ENCODE measurements at regions of chr14 and their contacts with region 1.

Region 1: GRCh38 chr14:54773171-54773975 is 129.3 kb downstream of the GCH1 start:
- DNase-seq: peak; percentile 21 to 83 (median 58)
- ATAC-seq: peak; percentile 78
- H3K4me3 ChIP-seq: peak overlapping the region; percentile 14
- H3K4me3 Mint-ChIP-seq: peak overlapping the region in 9 of 10 donors; percentile 15 to 80 (median 71)
- H3K27ac ChIP-seq: peak overlapping the region; percentile 14
- H3K27ac Mint-ChIP-seq: peak overlapping the region; percentile 24 to 88 (median 77)
- H3K4me1 ChIP-seq: peaks cover 4 to 27% of the 10 kb centered on the region in 2 donors
- H3K4me1 Mint-ChIP-seq: peaks cover 19 to 42% (median 23%) of the 10 kb centered on the region in 7 donors
- H3K27me3 ChIP-seq: no peaks in the 10 kb centered on the region
- H3K27me3 Mint-ChIP-seq: peaks cover 0 to 31% (median 10%) of the 10 kb centered on the region in 5 donors

Region 2: GRCh38 chr14:54488646-54489317 is 284.6 kb before region 1 on chr14 and contains the start of gene GMFB:
- CTCF ChIA-PET with region 1: interaction called, 4 read pairs
- POLR2A ChIA-PET with region 1: no interaction called
- intact Hi-C with region 1: loop called (anchors 2 to 5 kb)
- DNase-seq: peak; percentile 72 to 88 (median 84)
- ATAC-seq: peak; percentile 97
- H3K4me3 ChIP-seq: peak within 1 kb of the TSS; percentile 65
- H3K4me3 Mint-ChIP-seq: peak within 1 kb of the TSS; percentile 80 to 96 (median 92)
- H3K27ac ChIP-seq: peak within 1 kb of the TSS; percentile 86
- H3K27ac Mint-ChIP-seq: peak within 1 kb of the TSS; percentile 77 to 99 (median 97)
- H3K4me1 ChIP-seq: peaks cover 17 to 18% of the 10 kb centered on the region in 2 donors
- H3K4me1 Mint-ChIP-seq: peaks cover 42 to 69% (median 63%) of the 10 kb centered on the region in 7 donors
- H3K27me3 ChIP-seq: no peaks in the 10 kb centered on the region
- H3K27me3 Mint-ChIP-seq: peaks cover 0 to 3% (median 0%) of the 10 kb centered on the region in 5 donors
- total RNA-seq, gene GMFB: 28.9 to 39.9 (median 34.7) TPM

Region 3: GRCh38 chr14:54556535-54556934 is 216.8 kb before region 1 on chr14:
- CTCF ChIA-PET with region 1: interaction called, 113 read pairs
- POLR2A ChIA-PET with region 1: no interaction called
- intact Hi-C with region 1: no loop called
- DNase-seq: no peak
- ATAC-seq: no peak
- H3K4me3 ChIP-seq: no peak overlapping the region
- H3K4me3 Mint-ChIP-seq: no peak overlapping the region
- H3K27ac ChIP-seq: no peak overlapping the region
- H3K27ac Mint-ChIP-seq: no peak overlapping the region
- H3K4me1 ChIP-seq: no peaks in the 10 kb centered on the region
- H3K4me1 Mint-ChIP-seq: peaks cover 0 to 5% (median 0%) of the 10 kb centered on the region in 7 donors
- H3K27me3 ChIP-seq: no peaks in the 10 kb centered on the region
- H3K27me3 Mint-ChIP-seq: peaks cover 9 to 16% (median 11%) of the 10 kb centered on the region in 5 donors

Region 4: DNA sequence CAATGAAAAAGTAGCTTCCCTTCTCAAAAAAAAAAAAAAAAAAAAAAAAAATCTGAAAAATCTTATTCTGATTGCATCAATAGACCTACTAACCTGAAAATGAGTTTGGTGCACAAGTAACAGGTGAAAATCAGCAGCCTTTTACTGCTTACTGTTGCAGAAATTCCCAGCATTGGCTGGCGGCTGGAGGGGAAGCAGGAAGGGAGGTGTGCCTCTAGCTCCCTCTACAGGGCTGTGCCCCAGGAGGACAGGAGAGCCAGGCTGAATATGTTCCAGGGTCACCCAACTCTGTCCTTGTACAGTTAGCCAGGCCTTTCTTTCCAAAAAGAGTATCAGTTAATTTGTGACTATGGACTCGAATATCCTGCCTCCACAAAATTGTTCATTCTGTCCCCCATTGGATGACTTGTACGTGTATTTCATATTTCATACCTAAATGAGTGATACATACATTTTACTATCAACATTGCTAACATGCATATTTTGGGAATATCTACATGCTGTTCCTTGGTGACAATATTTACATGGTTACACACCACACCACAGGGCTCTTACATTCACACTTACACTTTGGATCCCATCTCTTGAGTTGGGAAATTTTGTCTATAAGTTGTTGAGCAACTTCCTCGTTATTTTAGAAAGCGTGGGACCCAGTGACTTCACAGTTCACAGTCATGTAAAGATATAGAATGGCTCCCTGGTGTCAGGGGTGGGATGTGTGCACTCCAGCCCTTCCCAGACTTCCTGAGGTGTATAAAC is 81.7 kb before region 1 on chr14:
- CTCF ChIA-PET with region 1: no interaction called
- POLR2A ChIA-PET with region 1: no interaction called
- intact Hi-C with region 1: loop called in 1 of 2 experiments (anchors 5 kb)
- DNase-seq: peak in 5 of 9 donors; percentile 4 to 30 (median 24)
- ATAC-seq: peak; percentile 63
- H3K4me3 ChIP-seq: no peak overlapping the region
- H3K4me3 Mint-ChIP-seq: no peak overlapping the region
- H3K27ac ChIP-seq: no peak overlapping the region
- H3K27ac Mint-ChIP-seq: no peak overlapping the region
- H3K4me1 ChIP-seq: no peaks in the 10 kb centered on the region
- H3K4me1 Mint-ChIP-seq: peaks cover 0 to 19% (median 0%) of the 10 kb centered on the region in 7 donors
- H3K27me3 ChIP-seq: no peaks in the 10 kb centered on the region
- H3K27me3 Mint-ChIP-seq: peaks cover 11 to 29% (median 20%) of the 10 kb centered on the region in 5 donors

Region 5: GRCh38 chr14:54805521-54806322 is 32.3 kb after region 1 on chr14:
- CTCF ChIA-PET with region 1: interaction called, 5 read pairs
- POLR2A ChIA-PET with region 1: no interaction called
- intact Hi-C with region 1: loop called in 1 of 2 experiments (anchors 1 kb)
- DNase-seq: peak; percentile 38 to 75 (median 56)
- ATAC-seq: peak; percentile 87
- H3K4me3 ChIP-seq: no peak overlapping the region
- H3K4me3 Mint-ChIP-seq: peak overlapping the region in 5 of 10 donors; percentile 20 to 58 (median 42)
- H3K27ac ChIP-seq: no peak overlapping the region
- H3K27ac Mint-ChIP-seq: peak overlapping the region in 1 of 9 donors; percentile 28
- H3K4me1 ChIP-seq: no peaks in the 10 kb centered on the region
- H3K4me1 Mint-ChIP-seq: peaks cover 0 to 6% (median 4%) of the 10 kb centered on the region in 7 donors
- H3K27me3 ChIP-seq: no peaks in the 10 kb centered on the region
- H3K27me3 Mint-ChIP-seq: peaks cover 10 to 27% (median 20%) of the 10 kb centered on the region in 5 donors

Region 6: DNA sequence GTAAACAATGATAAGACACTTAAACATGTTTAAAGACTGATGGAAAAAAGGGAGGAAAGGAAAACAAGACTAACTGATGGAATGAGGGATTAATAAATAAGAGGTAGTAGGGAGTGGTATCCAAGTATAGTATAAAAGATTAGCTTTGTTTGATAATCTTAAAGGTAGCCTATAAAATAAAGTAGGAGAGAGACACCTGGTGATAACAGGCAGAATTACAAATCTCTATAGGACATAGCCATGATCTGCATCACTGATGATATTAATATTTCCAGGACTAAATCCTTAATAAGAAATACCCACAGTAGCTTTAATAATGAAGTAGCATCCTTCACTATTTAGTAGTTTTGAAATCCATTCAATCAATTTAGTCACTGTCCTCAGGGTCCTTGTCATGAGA is 387.6 kb after region 1 on chr14:
- CTCF ChIA-PET with region 1: no interaction called
- POLR2A ChIA-PET with region 1: no interaction called
- intact Hi-C with region 1: loop called in 1 of 2 experiments (anchors 5 kb)
- DNase-seq: peak in 5 of 9 donors; percentile 6 to 37 (median 16)
- ATAC-seq: peak; percentile 68
- H3K4me3 ChIP-seq: no peak overlapping the region
- H3K4me3 Mint-ChIP-seq: no peak overlapping the region
- H3K27ac ChIP-seq: no peak overlapping the region
- H3K27ac Mint-ChIP-seq: peak overlapping the region in 1 of 9 donors; percentile 60
- H3K4me1 ChIP-seq: no peaks in the 10 kb centered on the region
- H3K4me1 Mint-ChIP-seq: peaks cover 0 to 20% (median 9%) of the 10 kb centered on the region in 7 donors
- H3K27me3 ChIP-seq: no peaks in the 10 kb centered on the region
- H3K27me3 Mint-ChIP-seq: peaks cover 0 to 4% (median 0%) of the 10 kb centered on the region in 5 donors